ENCODE measurements at regions of chr18 and their contacts with region 1.

Region 1: GRCh38 chr18:58541789-58542425 is 87.0 kb downstream of the ALPK2 start:
- DNase-seq: peak; percentile 79
- ATAC-seq: peak; percentile 79
- H3K4me3 Mint-ChIP-seq: no peak overlapping the region
- H3K27ac Mint-ChIP-seq: peak overlapping the region; percentile 79
- H3K4me1 Mint-ChIP-seq: peaks cover 90% of the 10 kb centered on the region
- H3K27me3 Mint-ChIP-seq: peaks cover 5% of the 10 kb centered on the region

Region 2: DNA sequence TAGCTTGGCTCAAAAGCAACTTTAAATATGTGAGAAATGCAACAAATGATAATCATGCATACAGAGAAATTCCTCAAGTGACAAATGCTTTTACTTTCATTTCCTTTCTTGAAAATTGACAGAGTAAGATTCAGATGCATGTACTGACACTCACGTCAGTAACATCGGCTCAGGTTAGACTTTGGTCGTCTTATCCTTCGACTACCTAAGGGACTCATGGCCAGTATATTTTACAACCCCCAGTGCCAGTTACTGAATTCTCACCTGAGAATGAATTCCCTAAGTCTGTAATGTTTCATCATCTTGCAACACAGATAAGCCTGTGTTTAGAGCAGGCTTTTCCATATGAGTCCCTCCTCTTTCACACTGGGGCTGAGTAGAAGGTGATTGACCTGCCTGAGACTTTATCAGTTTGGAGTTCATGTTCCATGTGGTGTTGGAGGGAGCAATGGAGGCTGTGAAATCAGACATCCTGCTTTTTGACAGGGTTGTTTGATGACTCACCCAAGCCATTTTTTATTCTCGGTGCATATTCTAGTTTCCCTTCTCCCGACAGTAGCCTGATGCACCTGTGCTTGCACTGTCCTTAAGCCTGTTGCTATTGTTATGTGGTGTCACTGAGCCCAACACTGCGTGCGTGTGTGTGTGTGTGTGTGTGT is 708.3 kb before region 1 on chr18:
- CTCF ChIA-PET with region 1: no interaction called
- POLR2A ChIA-PET with region 1: no interaction called
- intact Hi-C with region 1: loop called in 1 of 2 experiments (anchors 5 kb)
- DNase-seq: peak; percentile 56
- ATAC-seq: peak; percentile 49
- H3K4me3 Mint-ChIP-seq: peak overlapping the region; percentile 30
- H3K27ac Mint-ChIP-seq: peak overlapping the region; percentile 59
- H3K4me1 Mint-ChIP-seq: peaks cover 26% of the 10 kb centered on the region
- H3K27me3 Mint-ChIP-seq: peaks cover 29% of the 10 kb centered on the region

Region 3: GRCh38 chr18:58511897-58512581 is 29.9 kb before region 1 on chr18:
- CTCF ChIA-PET with region 1: no interaction called
- POLR2A ChIA-PET with region 1: no interaction called
- intact Hi-C with region 1: no loop called
- DNase-seq: no peak
- ATAC-seq: no peak
- H3K4me3 Mint-ChIP-seq: no peak overlapping the region
- H3K27ac Mint-ChIP-seq: no peak overlapping the region
- H3K4me1 Mint-ChIP-seq: no peaks in the 10 kb centered on the region
- H3K27me3 Mint-ChIP-seq: peaks cover 3% of the 10 kb centered on the region

Region 4: DNA sequence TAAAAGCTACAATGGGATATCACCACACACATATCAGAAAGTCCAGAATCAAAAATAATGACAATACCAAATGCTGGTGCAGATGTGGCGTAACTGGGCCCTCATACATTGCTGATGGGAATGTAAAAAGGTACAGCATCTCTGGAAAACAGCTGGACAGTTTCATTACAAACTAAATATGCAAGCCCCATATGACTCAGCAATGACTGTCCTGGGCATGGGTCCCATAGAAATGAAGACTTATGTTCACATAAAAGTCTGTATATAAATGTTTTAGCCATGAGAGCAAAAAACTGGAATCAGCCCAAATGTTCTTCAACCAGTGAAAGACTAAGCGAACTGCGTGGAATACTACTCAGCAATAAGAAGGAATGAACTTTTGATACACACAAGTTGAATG is 30.3 kb after region 1 on chr18:
- CTCF ChIA-PET with region 1: no interaction called
- POLR2A ChIA-PET with region 1: no interaction called
- intact Hi-C with region 1: loop called in 1 of 2 experiments (anchors 2 kb)
- DNase-seq: no peak
- ATAC-seq: no peak
- H3K4me3 Mint-ChIP-seq: no peak overlapping the region
- H3K27ac Mint-ChIP-seq: no peak overlapping the region
- H3K4me1 Mint-ChIP-seq: peaks cover 16% of the 10 kb centered on the region
- H3K27me3 Mint-ChIP-seq: no peaks in the 10 kb centered on the region

Region 5: DNA sequence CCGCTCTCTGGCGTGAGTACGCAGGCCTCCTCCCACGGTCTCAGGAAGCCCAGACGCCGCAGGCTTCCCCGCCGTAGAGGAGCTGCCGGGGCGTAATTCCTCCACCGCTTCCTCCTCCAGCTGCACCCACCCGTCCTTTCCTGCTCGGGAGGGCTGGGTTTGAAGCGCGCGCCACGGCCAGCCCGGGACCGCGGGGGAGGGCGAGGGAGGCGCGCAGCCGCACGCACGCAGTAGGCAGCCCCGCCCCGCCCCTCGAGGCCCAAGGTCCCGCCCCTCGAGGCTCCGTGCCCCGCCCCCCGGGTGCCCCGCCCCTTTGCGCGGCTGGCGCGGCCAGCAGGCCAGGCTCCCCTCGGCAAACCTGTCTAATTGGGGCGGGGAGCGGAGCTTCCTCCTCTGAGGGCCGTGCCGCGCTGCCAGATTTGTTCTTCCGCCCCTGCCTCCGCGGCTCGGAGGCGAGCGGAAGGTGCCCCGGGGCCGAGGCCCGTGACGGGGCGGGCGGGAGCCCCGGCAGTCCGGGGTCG is 129.3 kb after region 1 on chr18 and contains the start of gene MALT1:
- CTCF ChIA-PET with region 1: interaction called, 3 read pairs
- POLR2A ChIA-PET with region 1: interaction called, 3 read pairs
- intact Hi-C with region 1: loop called in 1 of 2 experiments (anchors 1 kb)
- DNase-seq: peak; percentile 97
- ATAC-seq: peak; percentile 83
- H3K4me3 Mint-ChIP-seq: peak within 1 kb of the TSS; percentile 98
- H3K27ac Mint-ChIP-seq: peak within 1 kb of the TSS; percentile 96
- H3K4me1 Mint-ChIP-seq: peaks cover 63% of the 10 kb centered on the region
- H3K27me3 Mint-ChIP-seq: no peaks in the 10 kb centered on the region
- total RNA-seq, gene MALT1: 39.3 to 40.5 TPM

Region 6: GRCh38 chr18:58761241-58761969 is 219.5 kb after region 1 on chr18:
- CTCF ChIA-PET with region 1: interaction called, 298 read pairs
- POLR2A ChIA-PET with region 1: no interaction called
- intact Hi-C with region 1: loop called in 1 of 2 experiments (anchors 1 kb)
- DNase-seq: peak; percentile 27
- ATAC-seq: peak; percentile 53
- H3K4me3 Mint-ChIP-seq: no peak overlapping the region
- H3K27ac Mint-ChIP-seq: peak overlapping the region; percentile 2
- H3K4me1 Mint-ChIP-seq: peaks cover 13% of the 10 kb centered on the region
- H3K27me3 Mint-ChIP-seq: peaks cover 18% of the 10 kb centered on the region

Region 7: GRCh38 chr18:59139371-59140298 is 597.7 kb after region 1 on chr18 and contains the start of gene SEC11C:
- CTCF ChIA-PET with region 1: no interaction called
- POLR2A ChIA-PET with region 1: no interaction called
- intact Hi-C with region 1: loop called (anchors 5 kb)
- DNase-seq: peak; percentile 97
- ATAC-seq: peak; percentile 94
- H3K4me3 Mint-ChIP-seq: peak within 1 kb of the TSS; percentile 94
- H3K27ac Mint-ChIP-seq: peak within 1 kb of the TSS; percentile 95
- H3K4me1 Mint-ChIP-seq: peaks cover 42% of the 10 kb centered on the region
- H3K27me3 Mint-ChIP-seq: peaks cover 8% of the 10 kb centered on the region
- total RNA-seq, gene SEC11C: 53.5 to 70.2 TPM

Measured in activated CD4-positive, alpha-beta T cell treated with anti-CD3 and anti-CD28 coated beads for 36 hours (primary cell).